Heart left ventricle (tissue), 16 donors: ENCODE measurements at regions of chr12 and their contacts with region 1.

Region 1: GRCh38 chr12:89179983-89180382 is 172.3 kb downstream of the DUSP6 start:
- DNase-seq: peak in 3 of 5 donors; percentile 35 to 75 (median 62)
- ATAC-seq: peak; percentile 73 to 93 (median 84)
- H3K4me3 ChIP-seq: no peak overlapping the region
- H3K27ac ChIP-seq: no peak overlapping the region
- H3K4me1 ChIP-seq: peaks cover 0 to 37% (median 15%) of the 10 kb centered on the region in 12 donors
- H3K27me3 ChIP-seq: no peaks in the 10 kb centered on the region
- CTCF ChIP-seq: no peak
- POLR2A ChIP-seq: no peak

Region 2: DNA sequence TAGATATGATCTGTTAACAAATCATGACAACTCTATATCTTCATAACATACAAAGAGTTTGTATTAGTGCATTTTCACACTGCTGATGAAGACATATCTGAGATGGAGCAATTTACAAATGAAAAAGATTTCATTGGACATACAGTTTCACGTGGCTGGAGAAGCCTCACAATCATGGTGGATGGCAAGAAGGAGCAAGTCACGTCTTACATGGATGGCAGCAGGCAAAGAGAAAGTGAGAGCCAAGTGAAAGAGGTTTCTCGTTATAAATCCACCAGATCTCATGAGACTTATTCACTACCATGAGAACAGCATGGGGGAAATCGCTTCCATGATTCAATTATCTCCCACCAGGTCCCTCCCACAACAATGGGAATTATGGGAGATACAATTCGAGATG is 14.7 kb after region 1 on chr12:
- intact Hi-C with region 1: loop called in 1 of 10 experiments (anchors 2 kb)
- DNase-seq: no peak
- ATAC-seq: no peak
- H3K4me3 ChIP-seq: no peak overlapping the region
- H3K27ac ChIP-seq: no peak overlapping the region
- H3K4me1 ChIP-seq: no peaks in the 10 kb centered on the region
- H3K27me3 ChIP-seq: no peaks in the 10 kb centered on the region
- CTCF ChIP-seq: no peak
- POLR2A ChIP-seq: no peak

Region 3: DNA sequence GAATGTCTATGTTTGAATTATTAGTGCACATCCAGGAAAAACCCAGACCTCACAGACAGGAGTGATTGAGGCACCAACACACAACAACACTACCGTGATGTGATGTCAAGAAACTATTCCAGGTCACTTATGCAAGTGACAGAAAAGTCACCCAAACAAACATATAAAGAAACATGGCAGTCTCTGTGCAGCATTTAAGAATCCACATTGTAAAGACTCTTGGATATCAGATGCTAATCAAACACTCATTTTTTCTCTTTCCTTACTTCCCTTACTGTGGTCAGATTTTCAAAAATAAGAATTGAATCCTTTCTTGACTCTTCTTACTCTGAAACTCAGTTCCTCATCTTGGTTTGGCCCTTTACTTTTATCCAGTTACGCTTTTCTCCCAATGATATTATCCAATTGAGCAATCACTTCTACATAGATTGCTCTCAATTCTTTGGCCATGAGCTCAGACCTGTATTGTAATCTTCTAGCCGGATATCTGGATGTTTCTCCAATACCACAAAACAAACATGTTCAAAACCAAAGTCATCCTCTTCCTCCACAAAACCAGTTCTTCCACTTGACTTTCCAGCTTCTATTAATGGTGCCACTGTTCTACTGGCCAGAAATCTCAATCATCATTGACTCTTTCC is 56.9 kb after region 1 on chr12:
- intact Hi-C with region 1: loop called in 1 of 10 experiments (anchors 5 kb)
- DNase-seq: no peak
- ATAC-seq: no peak
- H3K4me3 ChIP-seq: no peak overlapping the region
- H3K27ac ChIP-seq: peak overlapping the region in 1 of 12 donors; percentile 34
- H3K4me1 ChIP-seq: peaks cover 0 to 39% (median 21%) of the 10 kb centered on the region in 12 donors
- H3K27me3 ChIP-seq: no peaks in the 10 kb centered on the region
- CTCF ChIP-seq: no peak
- POLR2A ChIP-seq: no peak

Region 4: GRCh38 chr12:89278169-89278568 is 98.2 kb after region 1 on chr12:
- intact Hi-C with region 1: loop called in 1 of 10 experiments (anchors 10 kb)
- DNase-seq: no peak
- ATAC-seq: no peak
- H3K4me3 ChIP-seq: no peak overlapping the region
- H3K27ac ChIP-seq: peak overlapping the region in 1 of 12 donors; percentile 2
- H3K4me1 ChIP-seq: peaks cover 0 to 39% (median 9%) of the 10 kb centered on the region in 12 donors
- H3K27me3 ChIP-seq: no peaks in the 10 kb centered on the region
- CTCF ChIP-seq: no peak
- POLR2A ChIP-seq: no peak